Right ventricle myocardium inferior (tissue), 1 donor: ENCODE measurements at regions of chr1 and their contacts with region 1.

Region 1: DNA sequence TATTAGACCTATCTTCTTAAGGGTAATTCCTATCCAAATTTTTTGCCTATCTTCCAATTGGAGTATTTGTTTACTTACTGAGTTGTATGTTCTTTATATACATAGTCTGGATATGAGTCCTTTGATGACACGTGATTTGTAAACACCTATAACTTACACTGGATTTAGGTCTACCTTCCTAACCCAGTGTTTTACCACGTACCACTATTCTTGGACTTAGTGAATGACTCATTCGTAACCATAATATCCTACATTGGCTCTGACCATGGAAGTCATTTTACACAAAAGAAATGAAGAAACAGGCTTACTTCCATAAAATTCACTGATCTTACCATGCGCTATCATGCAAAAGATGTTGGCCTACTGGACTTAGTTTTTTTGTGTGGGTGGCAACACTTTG is 23.9 kb upstream of the ZZZ3 start:
- DNase-seq: no peak
- ATAC-seq: no peak

Region 2: DNA sequence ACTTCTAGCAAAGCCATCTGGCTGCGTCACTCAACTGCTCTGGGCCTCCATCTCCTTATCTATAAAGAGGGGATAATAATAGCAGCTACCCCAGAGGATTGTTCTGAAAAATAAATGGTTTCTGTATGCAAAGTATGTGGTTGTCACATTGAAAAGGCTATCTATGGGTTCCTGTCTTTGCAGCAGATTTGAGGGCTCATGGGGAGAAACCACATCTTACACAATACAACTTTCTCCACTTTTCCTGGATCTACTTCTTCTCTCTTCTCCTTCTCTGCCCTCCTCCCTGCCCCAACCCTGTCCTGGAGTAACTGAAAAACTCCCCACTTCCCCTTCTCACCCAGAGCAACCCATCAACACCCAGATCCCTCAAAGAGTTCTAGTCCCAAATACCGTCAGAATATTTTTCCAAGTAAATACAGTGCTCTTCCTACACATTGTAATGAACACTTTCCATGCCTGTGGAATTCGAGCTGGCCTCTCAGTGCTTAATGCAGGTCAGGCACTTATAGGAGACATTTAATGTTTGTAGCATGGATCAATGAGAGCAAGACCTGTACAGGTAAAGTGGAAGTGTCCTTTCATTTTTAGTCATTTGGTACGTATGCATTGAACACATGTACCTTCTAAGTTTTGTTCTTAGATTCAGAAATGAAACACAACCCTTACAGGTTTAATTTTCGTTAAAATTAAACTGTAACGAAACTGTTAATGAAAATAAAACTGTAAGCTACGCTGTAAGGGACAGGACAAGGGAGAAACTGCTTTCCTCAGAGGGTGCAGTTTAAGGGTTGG is 292.6 kb before region 1 on chr1:
- intact Hi-C with region 1: no loop called
- DNase-seq: no peak
- ATAC-seq: peak; percentile 48

Region 3: GRCh38 chr1:77961392-77961791 is 255.1 kb after region 1 on chr1:
- intact Hi-C with region 1: loop called (anchors 10 kb)
- DNase-seq: no peak
- ATAC-seq: no peak